PC-9 (cell line): ENCODE measurements at regions of chr1 and their contacts with region 1.

Region 1: DNA sequence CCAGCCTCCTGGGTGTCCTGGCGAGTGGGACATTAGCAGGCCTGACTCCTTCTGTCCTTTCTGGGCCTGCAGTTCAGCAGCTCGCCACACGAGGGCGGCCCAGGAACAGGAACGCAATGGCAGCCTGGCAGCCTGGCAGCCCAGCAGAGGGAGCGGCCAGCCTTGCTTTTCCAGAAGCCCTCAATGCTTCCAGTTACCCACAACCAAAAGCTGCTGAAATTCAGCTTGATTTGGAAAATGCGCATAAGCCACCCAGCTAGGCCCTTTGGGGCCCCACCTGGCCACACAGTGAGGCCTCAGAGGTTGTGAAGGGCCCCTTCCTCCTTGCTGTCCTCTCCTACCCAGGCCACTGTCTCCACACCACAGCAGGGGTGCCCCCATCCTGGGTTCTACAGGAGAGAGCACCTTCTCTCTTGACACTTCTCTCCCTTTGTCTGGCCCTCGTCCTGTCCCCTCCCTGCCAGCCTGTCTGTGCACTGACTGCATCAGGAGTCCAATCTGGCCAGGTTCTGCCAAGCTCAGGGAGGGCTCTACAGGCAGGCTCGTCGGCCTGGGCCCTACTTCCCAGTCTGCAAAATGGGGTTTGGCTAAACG is 103.4 kb upstream of the VAMP3 start:
- DNase-seq: peak in 1 of 2 experiments; percentile 85
- H3K4me3 ChIP-seq: no peak overlapping the region
- H3K27ac ChIP-seq: no peak overlapping the region
- H3K4me1 ChIP-seq: no peaks in the 10 kb centered on the region
- H3K27me3 ChIP-seq: peaks cover 21% of the 10 kb centered on the region; the same call in 1 of the 2 replicates
- CTCF ChIP-seq: peak; percentile 93

Region 2: DNA sequence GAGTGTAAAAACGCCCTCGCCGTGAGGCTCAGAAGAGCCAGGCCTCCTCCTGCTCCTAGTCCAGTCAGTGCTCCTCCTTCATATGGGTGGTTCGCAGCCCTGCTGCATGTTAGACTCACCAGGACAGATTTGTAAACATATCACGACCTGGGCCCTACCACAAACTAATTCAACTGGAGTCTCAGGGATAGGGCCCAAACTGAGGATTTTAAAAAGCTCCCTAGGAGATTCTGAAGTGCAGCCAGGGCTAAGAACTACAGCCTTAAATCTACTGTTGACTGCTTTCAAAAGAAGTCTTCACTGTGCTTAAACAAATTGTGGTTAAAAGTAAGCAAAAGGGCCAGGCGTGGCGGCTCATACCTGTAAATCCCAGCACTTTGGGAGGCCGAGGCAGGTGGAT is 825.4 kb before region 1 on chr1:
- CTCF ChIA-PET with region 1: interaction called, 11 read pairs
- POLR2A ChIA-PET with region 1: no interaction called
- intact Hi-C with region 1: no loop called
- DNase-seq: no peak
- H3K4me3 ChIP-seq: no peak overlapping the region
- H3K27ac ChIP-seq: no peak overlapping the region
- H3K4me1 ChIP-seq: no peaks in the 10 kb centered on the region
- H3K27me3 ChIP-seq: no peaks in the 10 kb centered on the region
- CTCF ChIP-seq: no peak

Region 3: DNA sequence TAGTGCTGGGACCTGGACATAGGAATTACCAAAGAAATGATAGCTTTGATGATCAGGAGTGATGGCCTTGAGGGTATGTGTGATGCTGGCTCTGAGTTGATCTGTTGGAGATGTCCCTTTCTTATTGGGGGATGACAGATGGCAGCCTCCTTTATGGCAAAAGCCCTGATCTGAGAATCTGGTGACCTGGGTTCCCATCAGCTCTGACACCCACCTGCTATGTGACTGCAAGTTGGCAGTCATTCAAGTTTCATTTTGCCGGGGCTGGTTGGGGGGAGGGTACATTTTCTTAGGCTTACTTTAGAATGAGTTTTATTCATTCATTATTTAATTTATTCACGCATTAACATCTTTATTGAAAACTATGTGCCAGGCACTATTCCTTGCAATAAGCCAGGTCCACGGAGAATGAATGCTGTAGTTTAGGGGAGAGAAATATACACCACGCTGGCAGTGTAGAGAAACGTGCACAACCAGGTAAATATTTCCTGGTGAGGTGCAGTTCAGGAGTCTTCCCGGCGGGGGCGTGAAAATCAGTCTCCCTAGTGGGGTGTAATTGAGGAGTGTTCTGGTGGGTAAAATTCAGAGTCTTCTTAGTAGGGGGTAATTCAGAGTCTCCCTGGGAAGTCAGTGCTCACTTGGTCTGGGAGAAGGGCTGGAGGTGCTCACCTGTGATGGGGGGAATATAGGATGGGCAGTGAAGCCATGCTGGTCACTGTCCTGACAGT is 481.2 kb before region 1 on chr1:
- CTCF ChIA-PET with region 1: no interaction called
- POLR2A ChIA-PET with region 1: no interaction called
- intact Hi-C with region 1: no loop called
- DNase-seq: no peak
- H3K4me3 ChIP-seq: no peak overlapping the region
- H3K27ac ChIP-seq: no peak overlapping the region
- H3K4me1 ChIP-seq: no peaks in the 10 kb centered on the region
- H3K27me3 ChIP-seq: 0 out of 2 replicates have a peak, but pooled peaks cover 1% of the 10 kb centered on the region
- CTCF ChIP-seq: no peak

Region 4: DNA sequence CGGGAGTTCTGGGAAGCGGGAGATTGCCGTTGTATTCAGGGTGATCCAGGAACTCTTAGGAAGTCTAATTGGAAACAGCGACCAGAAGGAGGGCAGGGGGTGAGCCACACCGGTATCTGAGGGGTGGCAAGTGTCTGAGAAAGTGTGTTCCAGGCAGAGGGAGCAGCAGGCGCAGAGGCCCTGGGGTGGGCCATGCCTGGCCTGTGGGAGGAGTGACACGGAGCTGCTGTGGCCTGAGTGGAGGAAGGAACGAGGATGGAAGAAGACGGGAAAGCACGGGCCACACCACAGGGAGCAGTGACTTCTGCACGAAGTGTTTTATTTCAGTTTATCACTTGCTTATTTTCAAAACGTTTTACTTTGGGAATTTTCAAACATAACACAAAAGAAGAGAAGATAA is 127.7 kb after region 1 on chr1:
- CTCF ChIA-PET with region 1: no interaction called
- POLR2A ChIA-PET with region 1: interaction called, 19 read pairs
- intact Hi-C with region 1: no loop called
- DNase-seq: no peak
- H3K4me3 ChIP-seq: no peak overlapping the region
- H3K27ac ChIP-seq: no peak overlapping the region
- H3K4me1 ChIP-seq: no peaks in the 10 kb centered on the region
- H3K27me3 ChIP-seq: no peaks in the 10 kb centered on the region
- CTCF ChIP-seq: no peak

Region 5: DNA sequence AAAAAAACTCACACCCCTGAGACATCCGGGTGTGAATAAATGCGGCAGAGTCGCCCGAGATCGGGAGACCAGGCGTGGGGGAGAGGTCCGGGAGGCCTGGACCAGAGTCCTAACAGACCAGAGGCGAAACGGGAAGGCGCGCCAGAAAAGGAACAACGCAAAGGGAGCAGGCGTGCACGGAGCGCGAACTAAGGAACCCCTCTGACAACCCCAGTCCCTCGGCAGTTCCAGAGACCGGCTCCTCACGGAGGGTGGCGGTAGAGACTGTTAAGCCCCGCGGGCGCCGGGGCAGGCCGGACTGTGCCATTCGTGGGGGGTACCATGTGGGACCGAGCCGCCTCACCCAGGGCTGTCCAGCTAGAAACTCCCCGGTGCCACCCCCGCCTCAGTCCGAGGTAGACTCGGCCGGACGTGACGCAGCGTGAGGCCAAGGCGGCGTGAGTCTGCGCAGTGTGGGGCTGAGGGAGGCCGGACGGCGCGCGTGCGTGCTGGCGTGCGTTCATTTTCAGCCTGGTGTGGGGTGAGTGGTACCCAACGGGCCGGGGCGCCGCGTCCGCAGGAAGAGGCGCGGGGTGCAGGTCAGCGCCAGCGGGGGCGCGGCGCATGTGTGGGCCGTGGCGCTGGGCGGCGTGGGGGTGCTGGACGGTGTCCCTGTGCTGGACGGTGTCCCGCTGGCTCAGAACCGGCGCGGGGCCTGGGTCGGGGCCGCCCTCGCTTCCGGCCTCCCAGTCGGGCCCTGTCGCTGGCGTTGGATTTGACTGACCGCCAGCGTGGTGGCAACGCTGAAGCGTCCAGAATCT is 293.7 kb after region 1 on chr1 and contains the start of gene PARK7:
- CTCF ChIA-PET with region 1: no interaction called
- POLR2A ChIA-PET with region 1: no interaction called
- intact Hi-C with region 1: loop called (anchors 5 kb)
- DNase-seq: peak; percentile 96 to 100
- H3K4me3 ChIP-seq: peak within 1 kb of the TSS; percentile 96
- H3K27ac ChIP-seq: peak within 1 kb of the TSS; percentile 70
- H3K4me1 ChIP-seq: peaks cover 15% of the 10 kb centered on the region
- H3K27me3 ChIP-seq: no peaks in the 10 kb centered on the region
- CTCF ChIP-seq: peak; percentile 43; the same call in 1 of the 2 replicates
- total RNA-seq, gene PARK7: 242 and 291 TPM in 2 replicates

Region 6: DNA sequence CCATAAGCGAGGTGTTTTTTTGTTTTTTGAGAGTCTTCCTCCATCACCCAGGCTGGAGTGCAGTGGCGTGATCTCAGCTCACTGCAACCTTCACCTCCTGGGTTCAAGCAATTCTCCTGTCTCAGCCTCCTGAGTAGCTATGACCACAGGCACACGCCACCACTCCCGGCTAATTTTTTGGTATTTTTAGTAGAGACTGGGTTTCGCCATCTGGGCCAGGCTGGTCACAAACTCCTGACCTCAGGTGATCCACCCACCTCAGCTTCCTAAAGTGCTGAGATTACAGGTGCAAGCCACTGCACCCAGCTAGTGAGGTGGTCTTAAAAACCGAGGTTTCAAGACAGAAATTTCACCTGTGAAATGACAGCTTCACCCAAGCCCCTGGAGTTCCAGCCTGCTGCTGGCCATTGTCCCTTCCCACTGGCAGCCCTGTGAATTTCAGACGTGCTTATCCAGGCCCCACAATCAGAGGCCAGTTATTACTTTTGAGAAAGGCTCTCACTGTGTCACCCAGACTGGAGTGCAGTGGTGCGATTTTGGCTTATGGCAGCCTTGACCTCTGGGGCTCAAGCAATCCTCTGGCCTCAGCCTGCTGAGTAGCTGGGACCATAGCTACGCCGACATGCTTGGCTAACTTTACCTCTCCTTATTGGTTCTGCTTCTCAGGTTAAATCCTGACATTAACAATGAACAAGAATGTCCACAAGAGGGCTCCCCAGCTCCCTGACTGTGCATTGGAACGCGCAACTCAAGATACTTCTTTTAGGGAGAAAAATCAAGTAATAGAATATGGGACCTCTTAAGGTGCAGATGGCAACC is 1191.4 kb after region 1 on chr1:
- CTCF ChIA-PET with region 1: no interaction called
- POLR2A ChIA-PET with region 1: no interaction called
- intact Hi-C with region 1: loop called (anchors 10 kb)
- DNase-seq: peak; percentile 31 to 48
- H3K4me3 ChIP-seq: no peak overlapping the region
- H3K27ac ChIP-seq: 0 out of 2 replicates have a peak overlapping the region, but pooled peaks have one; percentile 2
- H3K4me1 ChIP-seq: 0 out of 2 replicates have a peak, but pooled peaks cover 5% of the 10 kb centered on the region
- H3K27me3 ChIP-seq: no peaks in the 10 kb centered on the region
- CTCF ChIP-seq: peak; percentile 69